Calu3 (cell line): ENCODE measurements at regions of chr5 and their contacts with region 1.

Region 1: GRCh38 chr5:39283231-39283818 is 64.0 kb upstream of the FYB1 start:
- DNase-seq: peak; percentile 79
- H3K4me3 Mint-ChIP-seq: no peak overlapping the region
- H3K27ac Mint-ChIP-seq: peak overlapping the region; percentile 72
- H3K4me1 Mint-ChIP-seq: peaks cover 17% of the 10 kb centered on the region
- H3K27me3 Mint-ChIP-seq: no peaks in the 10 kb centered on the region
- CTCF ChIP-seq: peak; percentile 78

Region 2: GRCh38 chr5:38994324-38994927 is 288.9 kb before region 1 on chr5:
- CTCF ChIA-PET with region 1: no interaction called
- intact Hi-C with region 1: loop called (anchors 5 kb)
- DNase-seq: peak; percentile 37
- H3K4me3 Mint-ChIP-seq: no peak overlapping the region
- H3K27ac Mint-ChIP-seq: no peak overlapping the region
- H3K4me1 Mint-ChIP-seq: no peaks in the 10 kb centered on the region
- H3K27me3 Mint-ChIP-seq: no peaks in the 10 kb centered on the region
- CTCF ChIP-seq: no peak

Region 3: DNA sequence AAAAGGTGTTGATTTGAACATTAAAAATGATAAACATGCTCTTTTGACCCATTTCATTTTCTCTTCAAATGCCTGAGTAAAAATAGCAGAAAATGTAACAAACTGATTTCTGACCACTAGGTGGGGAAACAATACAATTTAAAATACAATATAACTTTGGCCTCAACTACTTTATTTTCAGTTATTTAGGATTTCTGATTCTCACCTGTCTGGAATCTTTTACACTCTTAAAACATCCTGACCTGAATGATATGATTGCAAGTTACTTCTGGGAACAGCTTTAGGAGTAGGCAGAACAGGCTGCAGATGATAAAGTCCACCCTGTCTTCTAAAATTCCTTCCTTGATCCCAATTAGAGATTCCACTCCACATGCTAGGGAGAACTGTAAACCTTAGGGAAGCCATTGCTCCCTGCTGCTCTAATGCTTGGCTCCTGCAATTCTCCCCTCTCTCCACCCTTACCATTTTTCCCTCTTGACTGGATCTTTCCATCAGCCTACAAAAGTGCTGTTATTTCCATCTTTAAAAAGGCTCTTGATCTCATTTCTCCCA is 134.3 kb before region 1 on chr5:
- CTCF ChIA-PET with region 1: interaction called, 4 read pairs
- intact Hi-C with region 1: loop called (anchors 1 kb)
- DNase-seq: no peak
- H3K4me3 Mint-ChIP-seq: no peak overlapping the region
- H3K27ac Mint-ChIP-seq: peak overlapping the region; percentile 76
- H3K4me1 Mint-ChIP-seq: peaks cover 12% of the 10 kb centered on the region
- H3K27me3 Mint-ChIP-seq: no peaks in the 10 kb centered on the region
- CTCF ChIP-seq: no peak

Region 4: GRCh38 chr5:39370555-39371366 is 87.4 kb after region 1 on chr5:
- CTCF ChIA-PET with region 1: interaction called, 6 read pairs
- intact Hi-C with region 1: loop called (anchors 5 kb)
- DNase-seq: no peak
- H3K4me3 Mint-ChIP-seq: no peak overlapping the region
- H3K27ac Mint-ChIP-seq: no peak overlapping the region
- H3K4me1 Mint-ChIP-seq: peaks cover 41% of the 10 kb centered on the region
- H3K27me3 Mint-ChIP-seq: no peaks in the 10 kb centered on the region
- CTCF ChIP-seq: no peak

Region 5: GRCh38 chr5:39547553-39548154 is 264.3 kb after region 1 on chr5:
- CTCF ChIA-PET with region 1: interaction called, 9 read pairs
- intact Hi-C with region 1: loop called (anchors 5 kb)
- DNase-seq: peak; percentile 49
- H3K4me3 Mint-ChIP-seq: no peak overlapping the region
- H3K27ac Mint-ChIP-seq: no peak overlapping the region
- H3K4me1 Mint-ChIP-seq: peaks cover 10% of the 10 kb centered on the region
- H3K27me3 Mint-ChIP-seq: no peaks in the 10 kb centered on the region
- CTCF ChIP-seq: peak; percentile 59

Region 6: GRCh38 chr5:39570403-39571027 is 287.2 kb after region 1 on chr5:
- CTCF ChIA-PET with region 1: no interaction called
- intact Hi-C with region 1: loop called (anchors 2 kb)
- DNase-seq: peak; percentile 10
- H3K4me3 Mint-ChIP-seq: no peak overlapping the region
- H3K27ac Mint-ChIP-seq: no peak overlapping the region
- H3K4me1 Mint-ChIP-seq: no peaks in the 10 kb centered on the region
- H3K27me3 Mint-ChIP-seq: no peaks in the 10 kb centered on the region
- CTCF ChIP-seq: peak; percentile 16